Activated CD8-positive, alpha-beta T cell treated with anti-CD3 and anti-CD28 coated beads for 36 hours (primary cell): ENCODE measurements at regions of chr17 and their contacts with region 1.

Region 1: GRCh38 chr17:1516388-1517161 is at the start of gene INPP5K:
- DNase-seq: peak; percentile 98
- ATAC-seq: peak; percentile 99
- H3K4me3 Mint-ChIP-seq: peak within 1 kb of the TSS; percentile 85
- H3K27ac Mint-ChIP-seq: peak within 1 kb of the TSS; percentile 82
- H3K4me1 Mint-ChIP-seq: peaks cover 24% of the 10 kb centered on the region
- H3K27me3 Mint-ChIP-seq: no peaks in the 10 kb centered on the region
- CTCF ChIP-seq: no peak
- total RNA-seq, gene INPP5K: 16.5 to 16.7 TPM

Region 2: GRCh38 chr17:1275962-1276736 is 240.4 kb before region 1 on chr17:
- CTCF ChIA-PET with region 1: no interaction called
- POLR2A ChIA-PET with region 1: no interaction called
- intact Hi-C with region 1: loop called (anchors 10 kb)
- DNase-seq: peak; percentile 83
- ATAC-seq: peak; percentile 94
- H3K4me3 Mint-ChIP-seq: no peak overlapping the region
- H3K27ac Mint-ChIP-seq: no peak overlapping the region
- H3K4me1 Mint-ChIP-seq: peaks cover 3% of the 10 kb centered on the region
- H3K27me3 Mint-ChIP-seq: peaks cover 27% of the 10 kb centered on the region
- CTCF ChIP-seq: peak; percentile 93

Region 3: GRCh38 chr17:1455797-1456599 is 60.6 kb before region 1 on chr17 and contains the start of gene CRK:
- CTCF ChIA-PET with region 1: interaction called, 3 read pairs
- POLR2A ChIA-PET with region 1: interaction called, 3 read pairs
- intact Hi-C with region 1: loop called (anchors 5 kb)
- DNase-seq: peak; percentile 96
- ATAC-seq: peak; percentile 97
- H3K4me3 Mint-ChIP-seq: peak within 1 kb of the TSS; percentile 88
- H3K27ac Mint-ChIP-seq: peak within 1 kb of the TSS; percentile 89
- H3K4me1 Mint-ChIP-seq: peaks cover 33% of the 10 kb centered on the region
- H3K27me3 Mint-ChIP-seq: peaks cover 12% of the 10 kb centered on the region
- CTCF ChIP-seq: no peak
- total RNA-seq, gene CRK: 12.1 to 12.9 TPM

Region 4: DNA sequence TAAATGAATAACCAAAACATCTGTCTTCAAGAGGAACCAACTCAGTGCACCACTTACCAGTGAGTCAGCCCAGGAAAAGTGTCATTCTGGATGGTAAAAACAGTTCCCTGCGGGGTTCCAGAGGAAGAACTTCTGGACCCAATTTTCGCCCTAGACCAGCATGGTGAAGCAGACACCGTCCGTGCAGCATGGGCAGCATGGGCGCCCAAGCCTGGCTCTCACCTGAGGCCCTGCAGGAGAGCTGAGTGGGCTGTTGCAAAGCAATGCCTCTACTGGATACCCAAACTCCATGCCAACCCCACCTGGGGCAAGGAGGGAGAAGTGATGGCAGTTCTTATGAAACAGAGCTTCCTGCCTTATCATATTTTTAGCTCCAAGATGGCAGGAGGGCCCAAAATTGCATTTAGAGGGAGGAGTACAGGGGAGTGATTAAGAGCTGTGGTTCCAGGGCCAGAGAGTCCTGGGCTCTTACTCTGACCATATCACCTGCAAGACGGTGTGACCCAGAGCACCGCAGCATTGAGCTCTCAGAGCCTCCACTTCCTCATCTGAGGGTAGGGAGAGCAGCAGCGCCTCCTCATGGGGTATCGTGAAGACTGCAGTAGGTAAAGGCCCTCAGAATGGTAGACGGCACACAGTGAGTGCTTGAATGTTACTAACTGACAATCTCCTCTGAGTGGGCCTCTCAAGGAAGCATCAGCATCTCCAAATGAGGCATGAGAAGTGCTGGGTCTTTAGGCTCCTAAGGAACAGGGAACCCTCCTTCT is 16.4 kb after region 1 on chr17:
- CTCF ChIA-PET with region 1: interaction called, 16 read pairs
- POLR2A ChIA-PET with region 1: no interaction called
- intact Hi-C with region 1: no loop called
- DNase-seq: peak; percentile 64
- ATAC-seq: peak; percentile 83
- H3K4me3 Mint-ChIP-seq: no peak overlapping the region
- H3K27ac Mint-ChIP-seq: no peak overlapping the region
- H3K4me1 Mint-ChIP-seq: peaks cover 1% of the 10 kb centered on the region
- H3K27me3 Mint-ChIP-seq: no peaks in the 10 kb centered on the region
- CTCF ChIP-seq: peak; percentile 33